PC-3 (cell line): ENCODE measurements at regions of chr12 and their contacts with region 1.

Region 1: DNA sequence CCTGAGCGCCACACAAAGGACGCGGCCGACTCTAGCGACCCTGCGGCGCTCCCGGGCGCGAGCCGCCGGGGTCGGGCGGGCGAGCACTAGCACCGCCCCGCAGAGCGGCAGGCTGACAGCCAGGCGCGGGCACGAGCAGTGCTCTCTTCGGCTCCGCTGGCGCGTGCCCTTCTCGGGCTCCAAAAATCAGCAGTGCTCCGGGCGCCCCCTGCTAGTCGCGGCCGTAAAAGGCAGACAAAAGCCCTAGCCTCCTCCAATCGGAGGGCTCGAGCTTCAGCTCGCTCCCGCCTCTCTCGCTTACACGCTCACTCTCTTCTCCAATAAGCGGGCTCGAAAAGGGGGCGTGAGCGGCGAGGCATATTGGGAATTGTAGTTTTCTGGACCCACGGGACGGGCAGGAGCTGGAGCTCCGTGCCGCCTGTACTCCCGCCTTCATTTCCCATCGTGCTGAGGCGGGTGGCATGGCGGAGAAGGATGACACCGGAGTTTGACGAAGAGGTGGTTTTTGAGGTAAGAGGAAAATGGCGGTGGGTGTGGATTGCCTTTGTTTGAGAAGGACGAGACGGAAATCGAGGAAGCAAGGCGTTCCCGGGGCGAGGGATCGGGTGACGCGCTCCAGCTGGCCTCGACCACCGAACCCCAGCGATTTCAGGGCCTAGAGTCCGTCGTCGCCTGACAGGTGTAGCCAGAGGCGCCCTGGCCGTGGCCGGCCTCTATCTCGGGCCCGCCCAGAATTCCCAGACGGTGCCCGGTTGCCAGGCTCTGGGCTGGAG is at the starts of genes FGD6 and VEZT:
- DNase-seq: peak; percentile 99
- ATAC-seq: peak; percentile 74
- H3K4me3 ChIP-seq: peak within 1 kb of the TSS; percentile 93
- H3K27ac ChIP-seq: peak within 1 kb of the TSS; percentile 90
- H3K4me1 ChIP-seq: peaks cover 53% of the 10 kb centered on the region
- H3K27me3 ChIP-seq: no peaks in the 10 kb centered on the region
- CTCF ChIP-seq: peak; percentile 64
- total RNA-seq, gene FGD6: 14.2 and 14.3 TPM in 2 replicates
- total RNA-seq, gene VEZT: 83.6 and 85.9 TPM in 2 replicates

Region 2: GRCh38 chr12:95072900-95073697 is 144.5 kb before region 1 on chr12 and contains the start of gene NR2C1:
- CTCF ChIA-PET with region 1: no interaction called
- POLR2A ChIA-PET with region 1: no interaction called
- intact Hi-C with region 1: loop called (anchors 2 kb)
- DNase-seq: peak; percentile 94
- ATAC-seq: peak; percentile 93
- H3K4me3 ChIP-seq: peak within 1 kb of the TSS; percentile 100
- H3K27ac ChIP-seq: peak within 1 kb of the TSS; percentile 46
- H3K4me1 ChIP-seq: peaks cover 6% of the 10 kb centered on the region
- H3K27me3 ChIP-seq: no peaks in the 10 kb centered on the region
- CTCF ChIP-seq: no peak
- total RNA-seq, gene NR2C1: 31.6 and 43.7 TPM in 2 replicates

Region 3: GRCh38 chr12:95102916-95103671 is 114.5 kb before region 1 on chr12:
- CTCF ChIA-PET with region 1: no interaction called
- POLR2A ChIA-PET with region 1: no interaction called
- intact Hi-C with region 1: loop called (anchors 1 kb)
- DNase-seq: peak; percentile 99
- ATAC-seq: peak; percentile 70
- H3K4me3 ChIP-seq: peak overlapping the region; percentile 34
- H3K27ac ChIP-seq: peak overlapping the region; percentile 75
- H3K4me1 ChIP-seq: peaks cover 52% of the 10 kb centered on the region
- H3K27me3 ChIP-seq: no peaks in the 10 kb centered on the region
- CTCF ChIP-seq: no peak

Region 4: DNA sequence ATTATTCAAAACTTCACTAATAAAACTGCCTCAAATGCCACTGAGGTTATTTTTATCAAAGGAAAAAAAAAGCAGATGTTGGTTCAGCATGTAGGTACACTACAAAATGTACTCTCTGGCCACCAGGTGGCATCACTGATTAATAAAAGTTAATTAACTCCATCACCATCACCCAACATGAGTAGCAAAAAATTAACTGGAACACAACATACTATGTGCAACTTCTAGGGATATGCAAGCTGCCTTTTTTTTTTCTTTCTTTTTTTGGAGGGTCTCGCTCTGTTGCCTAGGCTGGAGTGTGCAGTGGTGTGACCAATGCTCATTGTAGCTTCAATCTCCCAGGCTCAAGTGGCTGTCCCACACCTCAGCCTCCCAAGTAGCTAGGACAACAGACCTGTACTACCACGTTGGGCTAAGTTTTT is 100.4 kb before region 1 on chr12:
- CTCF ChIA-PET with region 1: interaction called, 16 read pairs
- POLR2A ChIA-PET with region 1: interaction called, 5 read pairs
- intact Hi-C with region 1: loop called (anchors 1 kb)
- DNase-seq: peak; percentile 83
- ATAC-seq: peak; percentile 61
- H3K4me3 ChIP-seq: peak overlapping the region; percentile 47
- H3K27ac ChIP-seq: peak overlapping the region; percentile 78
- H3K4me1 ChIP-seq: peaks cover 49% of the 10 kb centered on the region
- H3K27me3 ChIP-seq: no peaks in the 10 kb centered on the region
- CTCF ChIP-seq: peak; percentile 92

Region 5: GRCh38 chr12:95169368-95169767 is 48.2 kb before region 1 on chr12:
- CTCF ChIA-PET with region 1: no interaction called
- POLR2A ChIA-PET with region 1: interaction called, 3 read pairs
- intact Hi-C with region 1: loop called (anchors 2 kb)
- DNase-seq: peak; percentile 80
- ATAC-seq: peak; percentile 100
- H3K4me3 ChIP-seq: no peak overlapping the region
- H3K27ac ChIP-seq: 0 out of 2 replicates have a peak overlapping the region, but pooled peaks have one; percentile 5
- H3K4me1 ChIP-seq: peaks cover 15% of the 10 kb centered on the region; the same call in 1 of the 2 replicates
- H3K27me3 ChIP-seq: no peaks in the 10 kb centered on the region
- CTCF ChIP-seq: no peak

Region 6: DNA sequence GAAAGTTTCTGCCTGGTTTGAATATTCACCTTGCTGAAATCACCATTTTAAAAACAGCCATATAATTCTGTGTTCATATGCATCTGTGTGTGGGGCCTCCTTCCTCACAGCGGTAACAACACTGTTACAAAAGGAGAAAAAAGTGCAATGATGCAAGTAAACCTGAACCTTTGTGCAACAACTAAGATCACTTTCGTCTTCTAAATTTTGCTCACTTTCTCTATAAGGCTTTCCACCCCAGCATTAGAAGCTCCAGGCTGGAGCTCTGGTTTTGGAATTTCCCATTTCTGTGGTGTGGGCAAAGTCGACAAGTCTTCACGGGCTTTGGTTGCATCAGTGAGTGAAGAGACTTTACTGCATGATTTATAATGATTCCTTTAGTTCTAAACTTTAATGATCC is 18.6 kb before region 1 on chr12:
- CTCF ChIA-PET with region 1: no interaction called
- POLR2A ChIA-PET with region 1: no interaction called
- intact Hi-C with region 1: loop called (anchors 2 kb)
- DNase-seq: no peak
- ATAC-seq: no peak
- H3K4me3 ChIP-seq: no peak overlapping the region
- H3K27ac ChIP-seq: no peak overlapping the region
- H3K4me1 ChIP-seq: peaks cover 47% of the 10 kb centered on the region
- H3K27me3 ChIP-seq: no peaks in the 10 kb centered on the region
- CTCF ChIP-seq: no peak

Region 7: DNA sequence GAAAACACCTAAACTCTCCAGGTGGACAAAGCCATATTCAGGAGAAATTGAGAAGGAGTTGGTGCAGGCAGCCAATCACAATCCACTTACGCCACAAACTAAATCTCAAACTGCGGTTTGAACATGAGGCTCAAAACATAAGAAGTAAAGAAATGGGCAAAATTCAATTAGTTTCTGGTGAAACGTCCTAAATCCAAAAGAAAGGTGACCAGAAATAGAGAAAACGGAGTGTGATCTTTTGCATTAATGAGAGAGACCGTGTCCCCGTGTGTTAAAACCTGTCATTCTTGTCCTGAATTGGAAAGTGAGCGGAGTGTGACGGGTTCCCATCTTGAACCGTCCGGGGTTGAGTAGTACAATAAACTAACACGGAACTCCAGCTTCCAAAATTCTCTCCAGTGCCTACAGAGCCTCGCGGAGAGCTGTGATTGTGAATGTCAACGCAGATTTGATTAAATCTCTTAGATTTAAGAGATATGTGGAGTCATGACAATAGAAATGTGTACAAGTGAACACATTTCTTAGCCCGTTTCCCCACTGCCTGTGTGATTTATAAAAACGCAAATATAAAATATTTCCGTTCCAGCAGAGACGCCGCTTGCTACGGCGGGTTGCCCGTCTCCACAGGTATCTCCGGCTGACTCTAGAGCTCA is 255.8 kb after region 1 on chr12:
- CTCF ChIA-PET with region 1: no interaction called
- POLR2A ChIA-PET with region 1: no interaction called
- intact Hi-C with region 1: no loop called
- DNase-seq: peak; percentile 58
- ATAC-seq: peak; percentile 56
- H3K4me3 ChIP-seq: peak overlapping the region; percentile 91
- H3K27ac ChIP-seq: peak overlapping the region; percentile 83
- H3K4me1 ChIP-seq: peaks cover 22% of the 10 kb centered on the region
- H3K27me3 ChIP-seq: no peaks in the 10 kb centered on the region
- CTCF ChIP-seq: no peak

Region 8: DNA sequence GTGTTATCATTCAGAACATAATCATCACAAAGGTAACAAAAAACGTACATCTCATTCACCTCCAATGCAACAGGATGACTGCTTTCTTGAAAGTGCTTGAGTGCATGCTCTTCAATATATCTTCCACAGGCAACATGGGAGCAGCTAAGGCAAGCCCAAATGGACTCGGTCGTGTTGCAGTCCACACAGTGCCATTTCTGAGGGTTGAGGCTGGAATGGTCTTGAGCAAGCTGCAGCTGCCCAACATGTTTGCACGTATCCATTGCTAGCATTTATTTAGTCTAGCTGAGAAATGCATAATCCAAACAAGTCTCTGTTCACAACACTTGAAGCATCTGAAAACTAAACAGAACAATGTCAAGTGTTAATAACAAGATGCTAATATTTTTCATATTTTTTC is 316.4 kb after region 1 on chr12:
- CTCF ChIA-PET with region 1: interaction called, 6 read pairs
- POLR2A ChIA-PET with region 1: interaction called, 6 read pairs
- intact Hi-C with region 1: loop called (anchors 1 kb)
- DNase-seq: no peak
- ATAC-seq: no peak
- H3K4me3 ChIP-seq: no peak overlapping the region
- H3K27ac ChIP-seq: no peak overlapping the region
- H3K4me1 ChIP-seq: peaks cover 5% of the 10 kb centered on the region; the same call in 1 of the 2 replicates
- H3K27me3 ChIP-seq: no peaks in the 10 kb centered on the region
- CTCF ChIP-seq: no peak